Endothelial cell of umbilical vein (primary cell): ENCODE measurements at regions of chr1 and their contacts with region 1.

Region 1: DNA sequence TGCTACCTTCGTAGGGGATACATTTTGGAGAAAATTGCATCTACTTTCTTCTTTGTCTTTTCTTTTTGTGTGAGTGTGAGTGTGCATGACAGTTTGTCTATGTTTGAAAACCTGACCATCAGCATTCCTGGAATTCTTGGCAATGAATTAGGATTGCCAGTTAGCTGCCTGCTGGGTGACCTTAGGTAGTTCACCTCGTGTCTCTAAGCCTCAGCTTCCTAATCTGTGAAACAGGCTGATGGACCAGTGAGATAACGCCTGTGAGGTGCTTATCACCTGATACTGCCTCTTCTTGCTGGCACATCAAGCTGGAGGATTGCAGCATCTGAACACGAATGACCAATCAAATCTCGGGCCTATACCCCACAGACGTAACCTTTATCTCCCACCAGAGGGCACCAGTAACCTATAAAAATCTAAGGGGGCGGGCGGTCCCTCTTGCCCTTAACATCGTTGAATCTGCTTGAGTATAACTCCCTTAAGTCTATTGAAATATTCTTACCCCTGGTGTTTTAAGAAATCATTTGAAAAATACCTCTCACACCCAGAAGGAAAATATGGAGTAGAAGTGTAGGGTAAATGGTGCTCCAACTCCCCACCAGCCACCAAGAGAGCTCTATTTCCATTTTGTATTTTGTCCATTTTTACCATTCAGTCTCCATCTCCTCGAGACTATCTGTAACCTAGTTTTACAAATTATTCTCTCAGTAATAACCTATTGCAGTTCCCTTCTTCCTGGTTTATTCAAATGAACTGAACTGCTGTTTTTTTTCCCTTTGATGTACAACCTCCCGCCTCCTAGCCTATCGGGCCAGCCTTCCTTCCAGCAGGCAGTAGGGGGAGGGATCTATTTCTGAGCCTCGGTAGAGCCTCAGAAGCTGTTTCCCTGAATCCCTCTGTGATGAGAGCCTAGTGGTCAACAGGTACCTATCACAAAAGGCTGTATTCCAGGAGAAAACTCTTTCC is 49.7 kb downstream of the MDM4 start:
- DNase-seq: peak; percentile 75
- H3K4me3 ChIP-seq: no peak overlapping the region
- H3K27ac ChIP-seq: no peak overlapping the region
- H3K4me1 ChIP-seq: no peaks in the 10 kb centered on the region
- H3K27me3 ChIP-seq: no peaks in the 10 kb centered on the region
- CTCF ChIP-seq: peak; percentile 64 to 71
- POLR2A ChIP-seq: no peak

Region 2: DNA sequence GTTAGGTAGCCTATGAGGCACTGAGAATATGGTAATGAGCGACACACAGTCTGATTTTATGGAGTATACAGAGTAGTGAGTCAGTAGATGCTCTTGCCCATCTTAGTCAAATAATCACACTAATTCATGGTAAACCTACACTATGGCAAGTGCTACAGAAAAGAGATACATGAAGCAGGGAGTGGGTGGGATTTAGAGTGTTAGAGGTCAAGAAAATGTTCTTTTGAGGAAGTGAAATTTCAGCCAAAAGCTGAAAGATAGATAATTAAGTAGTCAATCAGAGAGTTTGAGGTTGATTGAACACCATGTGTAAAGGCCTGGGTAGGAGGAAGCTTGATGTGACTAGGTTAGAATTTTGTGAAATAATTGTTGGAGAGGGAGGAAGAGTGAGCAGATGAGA is 35.0 kb before region 1 on chr1:
- CTCF ChIA-PET with region 1: no interaction called
- POLR2A ChIA-PET with region 1: no interaction called
- dilution Hi-C with region 1: no loop called
- intact Hi-C with region 1: no loop called
- DNase-seq: no peak
- H3K4me3 ChIP-seq: no peak overlapping the region
- H3K27ac ChIP-seq: no peak overlapping the region
- H3K4me1 ChIP-seq: no peaks in the 10 kb centered on the region
- H3K27me3 ChIP-seq: no peaks in the 10 kb centered on the region
- CTCF ChIP-seq: no peak
- POLR2A ChIP-seq: no peak

Region 3: DNA sequence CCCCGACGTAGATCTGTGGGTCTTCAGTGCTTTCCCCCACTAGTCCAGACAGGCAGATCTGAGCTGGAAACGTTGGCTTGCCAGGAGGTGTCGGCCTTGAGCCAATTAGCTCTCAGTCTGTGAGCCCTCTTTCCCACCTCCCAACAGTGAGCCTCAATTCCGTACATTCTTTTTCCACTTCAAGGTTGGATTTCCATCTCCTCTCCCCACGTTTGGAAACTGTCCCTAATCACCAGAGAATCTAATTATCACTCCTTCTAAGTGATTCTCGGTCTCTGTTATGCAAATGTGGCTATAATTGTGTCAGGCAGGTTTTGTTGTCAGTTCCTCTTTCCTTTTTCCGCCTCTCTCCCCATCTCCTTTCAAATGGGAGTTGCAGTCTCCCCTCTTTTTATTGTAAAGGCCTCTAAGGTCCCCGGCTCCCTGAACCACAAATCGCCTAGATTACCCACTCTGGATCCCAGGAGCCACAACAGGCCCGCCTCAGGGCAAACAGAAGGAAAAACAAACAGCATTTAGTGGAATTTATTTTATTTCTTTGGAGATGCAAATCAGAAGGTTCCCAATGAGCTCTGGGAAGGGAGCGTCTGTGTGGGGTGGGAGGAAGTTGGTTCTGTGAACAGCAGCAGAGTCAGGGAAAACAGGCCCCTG is 149.1 kb after region 1 on chr1:
- CTCF ChIA-PET with region 1: no interaction called
- POLR2A ChIA-PET with region 1: no interaction called
- dilution Hi-C with region 1: no loop called
- intact Hi-C with region 1: no loop called
- DNase-seq: no peak
- H3K4me3 ChIP-seq: no peak overlapping the region
- H3K27ac ChIP-seq: no peak overlapping the region
- H3K4me1 ChIP-seq: no peaks in the 10 kb centered on the region
- H3K27me3 ChIP-seq: peaks cover 36 to 45% of the 10 kb centered on the region in 2 experiments
- CTCF ChIP-seq: no peak
- POLR2A ChIP-seq: no peak

Region 4: GRCh38 chr1:204746838-204747442 is 181.0 kb after region 1 on chr1:
- CTCF ChIA-PET with region 1: interaction called, 7 read pairs
- POLR2A ChIA-PET with region 1: no interaction called
- dilution Hi-C with region 1: no loop called
- intact Hi-C with region 1: loop called (anchors 5 kb)
- DNase-seq: peak; percentile 43
- H3K4me3 ChIP-seq: no peak overlapping the region
- H3K27ac ChIP-seq: no peak overlapping the region
- H3K4me1 ChIP-seq: no peaks in the 10 kb centered on the region
- H3K27me3 ChIP-seq: peaks cover 2 to 3% of the 10 kb centered on the region in 2 experiments
- CTCF ChIP-seq: peak; percentile 80 to 96
- POLR2A ChIP-seq: no peak

Region 5: GRCh38 chr1:204763706-204764427 is 198.0 kb after region 1 on chr1:
- CTCF ChIA-PET with region 1: interaction called, 57 read pairs
- POLR2A ChIA-PET with region 1: no interaction called
- dilution Hi-C with region 1: no loop called
- intact Hi-C with region 1: loop called (anchors 1 kb)
- DNase-seq: peak; percentile 53
- H3K4me3 ChIP-seq: no peak overlapping the region
- H3K27ac ChIP-seq: no peak overlapping the region
- H3K4me1 ChIP-seq: no peaks in the 10 kb centered on the region
- H3K27me3 ChIP-seq: peaks cover 3 to 16% of the 10 kb centered on the region in 2 experiments
- CTCF ChIP-seq: peak; percentile 80 to 87
- POLR2A ChIP-seq: no peak

Region 6: DNA sequence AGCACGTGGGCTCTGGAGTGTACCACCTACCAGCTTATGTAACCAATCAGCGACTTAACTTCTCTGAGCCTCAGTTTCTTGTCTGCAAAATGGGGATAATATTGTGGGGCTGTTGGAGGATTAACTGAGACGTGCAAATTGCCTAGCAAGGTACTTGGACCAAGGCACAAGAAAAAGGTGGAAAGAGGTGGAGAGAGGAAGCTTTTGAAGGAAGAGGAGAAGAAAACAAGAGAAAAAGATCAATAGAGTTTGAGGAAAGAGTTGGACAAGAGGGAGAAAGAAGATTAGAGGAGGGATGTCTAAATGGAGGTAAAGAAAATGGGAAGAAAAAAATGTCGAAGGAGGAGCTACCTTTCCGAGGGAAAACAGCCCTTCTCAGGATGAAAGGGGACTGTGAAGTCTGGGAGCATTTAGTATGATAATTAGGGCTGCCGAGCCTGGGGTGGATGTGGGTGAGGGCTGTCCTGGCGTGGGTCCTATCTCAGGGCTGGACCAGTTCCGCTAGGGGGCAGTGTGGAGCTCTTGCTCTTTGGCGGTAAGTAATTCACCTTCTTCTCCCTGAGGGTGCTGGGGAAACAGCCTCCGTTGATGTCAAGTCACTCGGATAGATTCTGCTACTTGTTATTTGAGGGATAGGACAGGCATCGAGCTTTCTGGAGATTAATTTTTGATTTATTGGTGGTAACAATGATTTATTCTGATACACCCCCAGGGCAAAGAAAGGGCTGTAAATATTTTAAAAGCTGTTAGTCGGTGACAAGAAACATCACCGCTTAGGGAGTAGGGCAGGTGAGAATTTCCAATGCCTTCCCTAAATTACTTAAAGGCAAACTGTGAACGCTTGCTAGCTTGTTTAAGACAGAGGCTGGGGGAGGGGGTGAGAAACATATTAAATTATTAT is 225.8 kb after region 1 on chr1:
- CTCF ChIA-PET with region 1: interaction called, 15 read pairs
- POLR2A ChIA-PET with region 1: no interaction called
- dilution Hi-C with region 1: no loop called
- intact Hi-C with region 1: no loop called
- DNase-seq: peak; percentile 46
- H3K4me3 ChIP-seq: no peak overlapping the region
- H3K27ac ChIP-seq: no peak overlapping the region
- H3K4me1 ChIP-seq: no peaks in the 10 kb centered on the region
- H3K27me3 ChIP-seq: peaks cover 3 to 4% of the 10 kb centered on the region in 2 experiments
- CTCF ChIP-seq: peak; percentile 83 to 88
- POLR2A ChIP-seq: no peak

Region 7: GRCh38 chr1:204941421-204942338 is 375.8 kb after region 1 on chr1:
- CTCF ChIA-PET with region 1: interaction called, 7 read pairs
- POLR2A ChIA-PET with region 1: no interaction called
- dilution Hi-C with region 1: no loop called
- intact Hi-C with region 1: loop called (anchors 1 kb)
- DNase-seq: peak; percentile 63
- H3K4me3 ChIP-seq: no peak overlapping the region
- H3K27ac ChIP-seq: no peak overlapping the region
- H3K4me1 ChIP-seq: no peaks in the 10 kb centered on the region
- H3K27me3 ChIP-seq: peaks cover 5 to 10% of the 10 kb centered on the region in 2 experiments
- CTCF ChIP-seq: peak; percentile 78 to 86
- POLR2A ChIP-seq: no peak